ENCODE measurements at regions of chr1 and their contacts with region 1.

Region 1: DNA sequence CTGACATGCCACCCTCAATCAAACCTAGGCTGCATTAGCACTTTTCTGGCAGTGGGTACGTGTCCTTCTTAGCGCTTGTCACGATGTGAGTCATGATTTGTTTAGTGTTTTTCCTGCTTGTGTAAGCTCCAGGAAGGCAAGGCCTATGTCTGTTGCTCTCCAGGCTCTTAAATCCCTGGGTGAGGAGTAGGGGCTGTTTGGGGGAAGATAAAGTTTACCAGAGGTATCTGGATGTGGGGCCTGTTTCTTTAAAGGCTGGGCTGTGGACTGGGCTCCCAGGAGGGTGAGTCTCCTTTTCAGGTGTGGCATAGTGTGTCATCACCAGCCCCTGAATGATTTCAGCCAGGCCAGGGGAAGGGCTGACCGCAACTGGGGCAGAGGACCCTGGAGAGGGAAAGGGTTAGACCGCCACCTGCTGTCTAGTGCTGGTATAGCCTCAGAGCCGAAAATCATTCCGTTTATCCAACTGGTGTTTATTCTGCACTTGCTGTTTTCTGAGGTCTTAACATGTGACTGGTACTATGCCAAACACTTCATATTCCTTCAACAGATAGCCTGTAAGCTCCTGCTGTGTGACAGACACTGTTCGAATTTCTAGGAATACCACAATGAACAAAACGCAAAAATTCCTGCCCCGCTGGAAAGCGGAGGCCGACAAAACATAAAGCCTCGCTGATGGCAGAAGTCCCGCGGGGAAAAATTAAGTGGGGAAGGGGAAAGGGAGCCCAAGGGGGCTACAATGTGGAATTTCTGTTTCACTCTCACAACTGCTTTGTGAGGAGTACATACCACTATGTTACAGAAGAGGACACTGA is 9.7 kb downstream of the SERINC2 start:
- DNase-seq: peak; percentile 46 to 75 (median 51)
- ATAC-seq: peak; percentile 56 to 87 (median 74)
- H3K4me3 ChIP-seq: no peak overlapping the region
- H3K27ac ChIP-seq: no peak overlapping the region
- H3K4me1 ChIP-seq: peaks cover 0 to 6% (median 0%) of the 10 kb centered on the region in 12 donors
- H3K27me3 ChIP-seq: peaks cover 0 to 10% (median 0%) of the 10 kb centered on the region in 9 donors
- CTCF ChIP-seq: peak; percentile 87 to 97 (median 91)
- POLR2A ChIP-seq: no peak

Region 2: GRCh38 chr1:30718636-30719405 is 703.9 kb before region 1 on chr1:
- intact Hi-C with region 1: loop called in 2 of 10 experiments (anchors 10 kb)
- DNase-seq: peak in 4 of 5 donors; percentile 80 to 98 (median 86)
- ATAC-seq: peak; percentile 73 to 88 (median 86)
- H3K4me3 ChIP-seq: peak overlapping the region; percentile 24 to 71 (median 56)
- H3K27ac ChIP-seq: peak overlapping the region; percentile 80 to 100 (median 95)
- H3K4me1 ChIP-seq: peaks cover 0 to 15% (median 8%) of the 10 kb centered on the region in 12 donors
- H3K27me3 ChIP-seq: no peaks in the 10 kb centered on the region
- CTCF ChIP-seq: peak; percentile 95 to 99 (median 98)
- POLR2A ChIP-seq: peak in 1 of 2 donors; percentile 73

Region 3: GRCh38 chr1:31065310-31066217 is 357.1 kb before region 1 on chr1 and contains the start of gene PUM1:
- intact Hi-C with region 1: no loop called
- DNase-seq: peak; percentile 96 to 99 (median 98)
- ATAC-seq: peak; percentile 99 to 100 (median 100)
- H3K4me3 ChIP-seq: peak within 1 kb of the TSS; percentile 67 to 96 (median 73)
- H3K27ac ChIP-seq: peak within 1 kb of the TSS; percentile 85 to 99 (median 92)
- H3K4me1 ChIP-seq: peaks cover 4 to 40% (median 30%) of the 10 kb centered on the region in 12 donors
- H3K27me3 ChIP-seq: no peaks in the 10 kb centered on the region
- CTCF ChIP-seq: peak in 2 of 12 donors; percentile 10 to 25
- POLR2A ChIP-seq: peak in 1 of 2 donors; percentile 59
- total RNA-seq, gene PUM1: 60.4 to 96.3 (median 75.8) TPM

Region 4: GRCh38 chr1:31163866-31164265 is 258.8 kb before region 1 on chr1:
- intact Hi-C with region 1: loop called in 1 of 10 experiments (anchors 2 kb)
- DNase-seq: no peak
- ATAC-seq: no peak
- H3K4me3 ChIP-seq: no peak overlapping the region
- H3K27ac ChIP-seq: no peak overlapping the region
- H3K4me1 ChIP-seq: peaks cover 0 to 7% (median 0%) of the 10 kb centered on the region in 12 donors
- H3K27me3 ChIP-seq: no peaks in the 10 kb centered on the region
- CTCF ChIP-seq: no peak
- POLR2A ChIP-seq: no peak

Region 5: GRCh38 chr1:31335007-31335406 is 87.7 kb before region 1 on chr1:
- intact Hi-C with region 1: loop called in 1 of 10 experiments (anchors 5 kb)
- DNase-seq: no peak
- ATAC-seq: peak in 1 of 4 donors; percentile 39
- H3K4me3 ChIP-seq: no peak overlapping the region
- H3K27ac ChIP-seq: no peak overlapping the region
- H3K4me1 ChIP-seq: no peaks in the 10 kb centered on the region
- H3K27me3 ChIP-seq: no peaks in the 10 kb centered on the region
- CTCF ChIP-seq: peak; percentile 17 to 59 (median 38)
- POLR2A ChIP-seq: no peak

Region 6: DNA sequence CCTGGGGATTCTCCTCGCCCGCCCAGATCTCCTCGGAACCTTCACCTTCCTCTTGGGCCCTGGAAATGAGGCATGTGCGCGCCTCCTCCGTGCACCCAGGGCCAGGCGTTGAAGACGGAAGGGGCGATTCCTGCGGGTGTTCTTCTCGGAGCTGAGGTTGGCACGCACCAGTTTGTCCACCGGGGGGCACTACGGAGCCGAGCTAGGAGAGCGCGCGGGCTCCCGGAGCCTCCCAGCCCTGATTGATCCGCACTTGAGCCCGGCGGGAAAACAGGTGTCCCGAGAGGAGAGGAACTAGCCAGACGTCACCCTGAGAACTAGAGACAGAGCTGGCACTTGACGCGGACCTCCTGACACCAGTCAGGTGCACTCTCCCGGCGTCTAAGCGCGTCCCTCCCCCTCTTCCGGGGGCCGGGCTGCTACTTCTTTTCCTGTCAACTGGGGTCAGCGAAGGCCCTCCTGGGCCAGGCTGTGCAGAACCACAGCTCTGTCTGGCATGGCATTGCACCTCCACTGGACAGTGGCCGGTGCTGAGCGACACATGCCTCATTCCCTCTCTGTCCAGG is 28.0 kb before region 1 on chr1:
- intact Hi-C with region 1: loop called in 5 of 10 experiments (anchors 1 to 5 kb)
- DNase-seq: peak; percentile 76 to 90 (median 83)
- ATAC-seq: peak; percentile 87 to 97 (median 96)
- H3K4me3 ChIP-seq: peak overlapping the region; percentile 11 to 58 (median 36)
- H3K27ac ChIP-seq: peak overlapping the region in 9 of 12 donors; percentile 6 to 67 (median 49)
- H3K4me1 ChIP-seq: peaks cover 0 to 12% (median 5%) of the 10 kb centered on the region in 12 donors
- H3K27me3 ChIP-seq: peaks cover 0 to 3% (median 0%) of the 10 kb centered on the region in 9 donors
- CTCF ChIP-seq: peak; percentile 79 to 94 (median 91)
- POLR2A ChIP-seq: no peak

Region 7: DNA sequence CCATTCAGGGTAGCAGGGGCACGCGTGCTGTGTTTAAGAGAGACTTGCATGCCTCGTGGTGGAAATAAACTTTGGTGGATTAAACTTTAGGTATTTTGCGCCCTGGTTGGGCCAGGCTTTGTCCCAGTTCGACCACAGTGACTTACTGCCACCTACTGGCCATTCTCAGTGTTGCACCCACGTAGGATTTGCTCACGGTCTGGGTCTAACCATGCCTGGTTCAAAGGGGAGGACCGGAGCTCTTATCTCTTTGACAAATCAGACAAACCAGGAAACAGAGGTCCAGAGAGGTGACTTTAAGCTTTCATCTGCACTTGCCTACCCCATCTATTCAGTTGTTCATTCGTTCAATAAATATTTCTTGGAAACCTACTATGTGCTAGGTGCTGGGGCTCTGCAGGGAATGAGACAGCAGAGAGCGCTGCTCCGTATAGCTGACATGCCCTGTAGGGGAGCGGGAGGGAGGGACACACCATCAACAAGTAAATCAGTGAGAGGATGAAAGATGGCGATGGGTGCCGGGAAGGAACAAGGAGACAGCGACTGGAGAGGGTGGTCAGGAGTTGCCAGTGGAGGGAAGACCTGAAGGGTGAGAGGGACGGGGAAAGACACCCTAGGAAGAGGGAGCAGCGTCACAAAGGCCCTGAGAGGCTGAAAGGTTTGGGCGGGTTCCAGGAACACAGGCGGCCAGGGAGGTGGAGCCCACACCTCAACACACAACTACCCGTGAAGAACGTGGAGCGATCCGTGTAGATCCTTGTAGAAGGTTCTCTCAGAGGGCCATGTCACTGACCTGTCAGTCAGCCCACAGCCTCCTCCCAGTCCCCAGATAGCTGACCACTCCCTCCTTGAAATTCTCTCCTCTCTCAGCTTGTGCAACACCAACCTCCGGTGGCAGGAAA is 126.4 kb after region 1 on chr1:
- intact Hi-C with region 1: loop called in 7 of 10 experiments (anchors 2 to 10 kb)
- DNase-seq: peak; percentile 67 to 80 (median 78)
- ATAC-seq: peak; percentile 85 to 93 (median 91)
- H3K4me3 ChIP-seq: peak overlapping the region in 8 of 12 donors; percentile 7 to 46 (median 34)
- H3K27ac ChIP-seq: peak overlapping the region in 10 of 12 donors; percentile 13 to 67 (median 53)
- H3K4me1 ChIP-seq: peaks cover 0 to 18% (median 8%) of the 10 kb centered on the region in 12 donors
- H3K27me3 ChIP-seq: peaks cover 0 to 5% (median 0%) of the 10 kb centered on the region in 9 donors
- CTCF ChIP-seq: peak; percentile 91 to 97 (median 94)
- POLR2A ChIP-seq: no peak

Region 8: GRCh38 chr1:31745096-31745945 is 322.6 kb after region 1 on chr1:
- intact Hi-C with region 1: no loop called
- DNase-seq: peak; percentile 50 to 80 (median 69)
- ATAC-seq: peak in 3 of 4 donors; percentile 66 to 81 (median 75)
- H3K4me3 ChIP-seq: no peak overlapping the region
- H3K27ac ChIP-seq: no peak overlapping the region
- H3K4me1 ChIP-seq: peaks cover 0 to 39% (median 8%) of the 10 kb centered on the region in 12 donors
- H3K27me3 ChIP-seq: no peaks in the 10 kb centered on the region
- CTCF ChIP-seq: peak; percentile 59 to 84 (median 69)
- POLR2A ChIP-seq: no peak

Measured in heart left ventricle (tissue), 16 donors.